ENCODE measurements at regions of chr6 and their contacts with region 1.

Region 1: GRCh38 chr6:150891888-150892485 is 26.5 kb downstream of the MTHFD1L start:
- DNase-seq: no peak
- H3K4me3 ChIP-seq: no peak overlapping the region
- H3K27ac ChIP-seq: no peak overlapping the region
- H3K4me1 ChIP-seq: peaks cover 0 to 35% (median 11%) of the 10 kb centered on the region in 6 donors
- H3K27me3 ChIP-seq: no peaks in the 10 kb centered on the region
- CTCF ChIP-seq: peak; percentile 68 to 92 (median 82)
- POLR2A ChIP-seq: no peak

Region 2: GRCh38 chr6:150783813-150784212 is 108.2 kb before region 1 on chr6:
- intact Hi-C with region 1: no loop called
- DNase-seq: no peak
- H3K4me3 ChIP-seq: no peak overlapping the region
- H3K27ac ChIP-seq: no peak overlapping the region
- H3K4me1 ChIP-seq: peaks cover 0 to 31% (median 9%) of the 10 kb centered on the region in 6 donors
- H3K27me3 ChIP-seq: no peaks in the 10 kb centered on the region
- CTCF ChIP-seq: no peak
- POLR2A ChIP-seq: no peak

Region 3: DNA sequence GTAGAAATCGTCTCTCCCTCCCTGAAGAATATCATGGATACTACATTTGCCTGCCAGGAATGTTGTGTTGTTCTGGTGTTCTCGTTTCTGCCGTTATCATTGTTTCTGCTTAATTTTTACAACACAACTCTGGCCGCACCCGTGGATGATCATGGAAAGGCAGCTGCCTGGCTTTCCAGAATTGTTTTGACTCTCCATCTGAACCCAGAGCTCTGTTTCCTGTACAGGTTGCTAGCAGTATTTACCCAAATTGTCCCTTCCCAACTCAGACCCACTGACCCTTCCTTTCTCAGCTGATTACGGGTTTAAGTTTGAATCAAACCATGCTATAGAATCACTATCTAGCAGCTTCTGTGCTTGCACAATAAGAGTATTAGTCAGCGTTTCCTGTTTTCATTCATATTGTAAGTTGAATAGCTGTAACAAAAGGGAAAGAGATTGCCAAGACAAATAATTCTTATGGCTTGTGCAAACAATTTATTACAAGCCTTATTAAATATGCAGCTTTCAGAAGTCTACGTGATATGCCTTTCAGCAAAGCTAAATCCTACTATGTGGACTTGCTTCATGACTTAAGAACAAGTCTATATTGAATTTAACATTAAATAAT is 112.5 kb after region 1 on chr6:
- intact Hi-C with region 1: loop called (anchors 10 kb)
- DNase-seq: no peak
- H3K4me3 ChIP-seq: peak overlapping the region in 1 of 8 donors; percentile 2
- H3K27ac ChIP-seq: peak overlapping the region in 7 of 8 donors; percentile 25 to 75 (median 48)
- H3K4me1 ChIP-seq: peaks cover 0 to 32% (median 19%) of the 10 kb centered on the region in 6 donors
- H3K27me3 ChIP-seq: no peaks in the 10 kb centered on the region
- CTCF ChIP-seq: no peak
- POLR2A ChIP-seq: no peak

Region 4: GRCh38 chr6:151323791-151324487 is 432.0 kb after region 1 on chr6:
- intact Hi-C with region 1: loop called (anchors 2 kb)
- DNase-seq: peak; percentile 92
- H3K4me3 ChIP-seq: peak overlapping the region in 1 of 8 donors; percentile 27
- H3K27ac ChIP-seq: peak overlapping the region in 7 of 8 donors; percentile 16 to 62 (median 41)
- H3K4me1 ChIP-seq: peaks cover 10 to 36% (median 28%) of the 10 kb centered on the region in 6 donors
- H3K27me3 ChIP-seq: peaks cover 0 to 31% (median 0%) of the 10 kb centered on the region in 7 donors
- CTCF ChIP-seq: peak; percentile 94 to 98 (median 97)
- POLR2A ChIP-seq: no peak